ENCODE measurements at regions of chr14 and their contacts with region 1.

Region 1: DNA sequence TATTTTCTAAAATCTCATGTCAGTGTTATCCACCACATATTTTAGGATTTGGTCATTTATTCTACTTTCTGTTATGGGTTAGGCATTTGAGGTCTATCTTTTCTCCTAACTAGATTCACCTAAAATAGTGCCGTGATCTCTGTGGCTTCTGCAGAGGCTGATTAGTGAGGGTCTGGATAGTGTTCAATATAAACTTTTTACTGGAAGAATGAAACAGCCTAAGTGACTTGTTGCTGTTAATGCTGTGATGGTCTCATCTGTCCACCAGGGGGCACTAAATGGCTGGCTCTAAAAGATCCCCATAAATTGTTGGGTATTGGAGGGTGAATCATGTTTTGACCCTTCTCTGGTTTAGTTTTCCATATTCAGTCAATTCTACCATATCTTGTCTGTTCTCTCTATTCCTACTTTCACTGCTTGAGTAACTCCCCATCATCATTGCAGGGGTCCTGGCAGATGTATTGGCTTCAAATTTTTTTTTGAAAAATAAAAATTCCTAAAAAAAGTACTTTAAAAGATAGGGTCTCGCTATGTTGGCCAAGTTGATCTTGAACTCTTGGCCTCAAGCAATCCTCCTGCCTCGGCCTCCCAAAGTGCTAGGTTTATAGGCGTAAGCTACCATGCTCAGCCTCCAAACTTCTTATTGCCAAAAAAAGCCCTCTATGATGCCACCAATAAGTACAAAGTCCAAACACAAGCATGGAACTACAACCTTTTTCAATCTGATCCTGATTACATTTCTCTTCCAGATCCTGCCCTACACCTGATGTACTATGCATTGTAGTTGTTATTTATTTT is 6.9 kb downstream of the PABPN1 start:
- DNase-seq: no peak

Region 2: DNA sequence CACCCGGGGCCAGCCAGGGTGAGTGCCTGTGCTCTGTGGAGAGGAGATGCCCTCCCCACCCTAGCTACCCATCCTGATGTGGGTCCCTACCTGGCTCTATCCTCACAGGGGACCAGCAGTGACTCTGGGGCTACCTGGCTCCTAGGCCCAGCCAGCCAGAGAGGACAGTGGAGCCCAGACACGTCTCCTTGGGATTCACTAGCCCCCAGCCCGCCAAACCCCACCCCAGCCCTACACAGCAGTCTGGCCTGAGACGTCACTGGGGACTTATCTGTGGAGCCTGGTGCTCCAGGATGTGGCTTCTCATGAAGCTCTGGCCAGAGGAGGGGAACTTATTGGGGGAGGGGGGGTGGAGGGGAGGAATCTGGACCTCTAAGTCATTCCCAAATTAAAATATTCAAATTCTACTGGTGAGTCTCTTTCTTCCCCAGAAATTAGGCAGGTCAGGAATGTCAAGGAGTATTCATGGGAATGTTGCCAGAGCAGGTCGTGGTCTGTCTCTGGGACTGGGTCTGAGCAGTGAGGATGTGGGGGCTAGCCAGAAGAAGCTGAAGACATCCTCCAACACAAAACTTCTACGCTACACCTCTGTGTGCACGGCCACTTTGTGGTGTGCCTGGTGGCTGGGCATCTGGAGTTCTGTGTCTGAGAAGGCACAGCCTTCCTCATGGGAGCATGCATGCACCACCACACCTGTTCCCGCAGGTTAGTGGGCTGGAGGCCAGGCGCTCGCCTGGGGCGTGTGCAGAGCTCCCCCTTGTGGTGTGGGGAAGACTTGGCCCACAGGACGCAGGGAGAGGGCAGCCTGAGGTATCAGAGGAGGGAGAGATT is 51.4 kb after region 1 on chr14:
- intact Hi-C with region 1: loop called (anchors 2 kb)
- DNase-seq: no peak

Region 3: DNA sequence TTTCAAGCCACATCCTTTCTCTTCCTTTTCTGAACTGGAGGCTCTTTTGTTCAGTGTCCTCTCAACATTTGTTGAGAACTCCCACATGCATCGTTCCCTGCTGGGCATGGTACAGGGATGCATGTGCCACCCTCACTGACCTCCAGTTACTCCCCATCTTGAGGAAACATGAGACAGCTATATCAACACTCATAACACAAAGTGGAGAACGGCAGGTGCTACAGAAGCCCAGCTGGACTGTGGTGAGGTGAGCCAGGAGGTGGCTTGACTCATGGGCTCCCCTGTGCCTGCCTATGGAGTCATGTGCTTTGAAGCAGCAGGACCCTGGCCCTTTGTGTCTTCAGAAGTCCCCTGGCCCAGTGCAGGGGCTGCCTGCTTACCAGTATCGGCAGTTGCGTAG is 70.2 kb after region 1 on chr14:
- intact Hi-C with region 1: no loop called
- DNase-seq: no peak

Region 4: DNA sequence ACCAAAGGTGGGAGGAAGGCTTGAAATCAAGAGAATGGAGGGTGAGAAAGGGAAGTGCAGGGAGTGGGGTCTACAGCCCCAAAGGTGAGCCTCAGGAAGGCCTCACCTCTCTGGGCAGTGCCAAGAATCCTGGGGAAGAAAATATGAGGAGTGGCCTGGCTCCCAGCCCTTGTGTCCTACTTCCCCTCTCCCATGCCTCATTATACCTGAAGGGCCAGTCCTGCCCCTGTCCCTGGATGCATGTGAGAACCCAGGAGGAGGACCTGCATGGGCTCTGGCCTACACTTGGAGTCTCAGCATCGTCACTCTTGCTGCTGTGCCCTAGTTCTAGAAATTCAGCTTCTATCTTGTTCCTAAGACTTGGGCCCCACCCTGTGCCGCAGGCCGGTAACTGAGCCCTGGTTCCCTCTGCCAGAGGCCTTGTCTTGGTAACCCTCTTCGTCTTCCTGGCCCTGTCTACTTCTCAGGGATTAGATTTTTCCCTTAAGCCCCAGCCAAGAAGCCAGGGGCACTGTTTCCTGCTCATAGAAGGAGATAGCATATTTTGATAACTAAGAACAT is 118.2 kb after region 1 on chr14:
- intact Hi-C with region 1: loop called (anchors 5 kb)
- DNase-seq: peak; percentile 59

Measured in cardiac septum (tissue), 1 donor.